ENCODE measurements at regions of chr2 and their contacts with region 1.

Region 1: GRCh38 chr2:144026753-144027152 is 493.2 kb downstream of the ZEB2 start:
- DNase-seq: no peak
- ATAC-seq: no peak
- H3K4me3 Mint-ChIP-seq: no peak overlapping the region
- H3K27ac Mint-ChIP-seq: no peak overlapping the region
- H3K4me1 Mint-ChIP-seq: no peaks in the 10 kb centered on the region
- H3K27me3 Mint-ChIP-seq: no peaks in the 10 kb centered on the region
- CTCF ChIP-seq: no peak

Region 2: DNA sequence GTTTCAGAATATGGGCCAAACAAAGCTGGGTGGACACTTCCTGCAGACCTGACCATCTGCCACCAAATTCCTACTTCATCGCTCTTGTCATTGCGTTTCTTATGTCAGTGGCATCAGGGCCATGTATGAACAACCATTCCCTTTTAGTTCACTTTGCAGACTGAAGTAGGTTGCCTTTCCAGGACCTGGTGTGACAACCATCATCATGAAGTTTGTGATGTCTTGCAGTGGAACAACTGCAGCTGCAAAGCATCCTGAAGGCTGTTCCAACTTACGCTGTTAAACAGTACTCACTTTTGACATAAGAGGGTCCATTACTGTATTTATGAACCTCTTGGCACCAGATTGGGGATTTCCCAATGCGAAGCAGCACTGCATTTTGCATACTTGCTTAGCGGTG is 385.9 kb before region 1 on chr2:
- CTCF ChIA-PET with region 1: no interaction called
- POLR2A ChIA-PET with region 1: no interaction called
- intact Hi-C with region 1: loop called (anchors 5 kb)
- DNase-seq: no peak
- ATAC-seq: no peak
- H3K4me3 Mint-ChIP-seq: no peak overlapping the region
- H3K27ac Mint-ChIP-seq: no peak overlapping the region
- H3K4me1 Mint-ChIP-seq: peaks cover 2% of the 10 kb centered on the region
- H3K27me3 Mint-ChIP-seq: no peaks in the 10 kb centered on the region
- CTCF ChIP-seq: no peak

Measured in activated CD8-positive, alpha-beta T cell treated with anti-CD3 and anti-CD28 coated beads for 36 hours (primary cell).